SK-N-SH (cell line): ENCODE measurements at regions of chr10 and their contacts with region 1.

Region 1: GRCh38 chr10:48363617-48364355 is 57.3 kb downstream of the MAPK8 start:
- DNase-seq: peak; percentile 30
- H3K4me3 ChIP-seq: no peak overlapping the region; a peak in 1 of 4 replicates
- H3K27ac ChIP-seq: peak overlapping the region; percentile 50 to 56; a peak in 3 of 4 replicates
- H3K4me1 ChIP-seq: peaks cover 15 to 26% of the 10 kb centered on the region in 2 experiments; a peak in 2 of 4 replicates
- H3K27me3 ChIP-seq: no peaks in the 10 kb centered on the region
- CTCF ChIP-seq: peak; percentile 82
- EP300 ChIP-seq: no peak
- RAD21 ChIP-seq: peak; percentile 96

Region 2: GRCh38 chr10:48353246-48353645 is 10.5 kb before region 1 on chr10:
- CTCF ChIA-PET with region 1: interaction called, 14 read pairs
- POLR2A ChIA-PET with region 1: no interaction called
- DNase-seq: no peak
- H3K4me3 ChIP-seq: no peak overlapping the region
- H3K27ac ChIP-seq: no peak overlapping the region
- H3K4me1 ChIP-seq: no peaks in the 10 kb centered on the region
- H3K27me3 ChIP-seq: no peaks in the 10 kb centered on the region
- CTCF ChIP-seq: no peak
- EP300 ChIP-seq: no peak
- RAD21 ChIP-seq: no peak

Region 3: DNA sequence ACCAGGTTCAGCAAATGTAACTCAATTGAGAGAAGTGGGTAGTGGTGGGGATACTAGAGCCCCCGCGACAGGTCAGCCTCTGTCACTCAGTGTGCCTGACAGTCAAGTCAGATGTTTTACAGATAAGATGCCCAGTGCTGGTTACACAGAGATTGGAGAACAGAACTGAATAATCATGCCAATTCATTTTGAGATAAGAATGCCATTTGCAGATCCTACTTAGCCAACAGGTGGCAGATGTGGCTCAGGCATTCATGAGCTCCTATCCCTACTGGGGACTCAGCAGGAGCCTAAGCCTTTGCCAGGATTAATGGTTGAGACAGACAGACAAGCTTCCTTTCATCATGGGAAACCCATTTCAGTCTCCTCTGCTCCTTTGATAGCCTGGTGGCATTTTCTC is 80.5 kb after region 1 on chr10:
- CTCF ChIA-PET with region 1: interaction called, 15 read pairs
- POLR2A ChIA-PET with region 1: no interaction called
- DNase-seq: peak; percentile 75
- H3K4me3 ChIP-seq: no peak overlapping the region
- H3K27ac ChIP-seq: peak overlapping the region in 1 of 2 experiments; percentile 36; a peak in 2 of 4 replicates
- H3K4me1 ChIP-seq: peaks cover 12 to 29% of the 10 kb centered on the region in 2 experiments; a peak in 3 of 4 replicates
- H3K27me3 ChIP-seq: no peaks in the 10 kb centered on the region
- CTCF ChIP-seq: peak; percentile 34; the same call in 1 of the 2 replicates
- EP300 ChIP-seq: peak in 1 of 2 experiments; percentile 53; a peak in 1 of 4 replicates
- RAD21 ChIP-seq: peak; percentile 81

Region 4: GRCh38 chr10:48523820-48524758 is 160.3 kb after region 1 on chr10:
- CTCF ChIA-PET with region 1: interaction called, 21 read pairs
- POLR2A ChIA-PET with region 1: no interaction called
- DNase-seq: peak; percentile 95
- H3K4me3 ChIP-seq: peak overlapping the region; percentile 59 to 65
- H3K27ac ChIP-seq: peak overlapping the region in 1 of 2 experiments; percentile 42; a peak in 2 of 4 replicates
- H3K4me1 ChIP-seq: peaks cover 23 to 28% of the 10 kb centered on the region in 2 experiments; a peak in 3 of 4 replicates
- H3K27me3 ChIP-seq: no peaks in the 10 kb centered on the region
- CTCF ChIP-seq: peak; percentile 69
- EP300 ChIP-seq: no peak
- RAD21 ChIP-seq: peak; percentile 43

Region 5: DNA sequence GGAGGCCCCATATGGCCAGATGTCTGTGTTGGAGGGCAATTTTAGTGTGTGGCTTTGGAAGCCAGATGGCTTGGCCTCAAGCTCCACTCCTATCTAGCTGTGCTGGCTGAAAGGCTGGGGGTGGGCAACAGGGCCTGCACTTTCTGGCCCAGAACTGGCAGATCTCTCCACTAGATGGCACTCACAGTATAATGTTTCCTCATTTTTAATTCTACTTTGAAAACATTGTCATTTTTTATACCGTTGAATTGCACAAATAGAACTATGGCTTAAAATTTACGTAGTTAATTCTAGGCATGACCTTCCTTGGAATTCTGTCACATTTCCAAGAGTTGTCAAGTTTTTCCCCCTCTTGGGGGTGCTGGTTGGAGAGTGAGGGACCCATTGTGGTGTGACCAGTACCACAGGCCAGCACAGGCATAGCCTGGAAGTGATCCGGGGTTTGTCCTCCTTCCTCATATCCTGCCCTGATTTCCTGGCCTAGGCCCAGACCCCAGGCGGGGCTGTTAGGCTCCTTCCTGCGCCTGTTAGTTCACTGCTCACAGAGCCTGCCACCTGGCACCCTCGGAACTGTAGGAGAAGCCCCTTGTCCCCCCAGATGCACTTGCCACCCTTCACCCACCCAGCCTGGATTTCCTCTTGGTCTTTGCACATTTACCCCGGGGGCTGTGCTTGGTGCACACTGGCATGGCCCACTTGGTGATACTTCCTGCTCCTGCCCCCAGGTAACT is 188.2 kb after region 1 on chr10:
- CTCF ChIA-PET with region 1: interaction called, 30 read pairs
- POLR2A ChIA-PET with region 1: interaction called, 3 read pairs
- DNase-seq: peak; percentile 87
- H3K4me3 ChIP-seq: no peak overlapping the region
- H3K27ac ChIP-seq: peak overlapping the region in 1 of 2 experiments; percentile 74; a peak in 2 of 4 replicates
- H3K4me1 ChIP-seq: peaks cover 0 to 27% of the 10 kb centered on the region in 2 experiments; a peak in 2 of 4 replicates
- H3K27me3 ChIP-seq: no peaks in the 10 kb centered on the region
- CTCF ChIP-seq: peak; percentile 85
- EP300 ChIP-seq: peak in 1 of 2 experiments; percentile 70; a peak in 2 of 4 replicates
- RAD21 ChIP-seq: peak; percentile 92